ENCODE measurements at regions of chr3 and their contacts with region 1.

Region 1: GRCh38 chr3:97719156-97719821 is 45.3 kb upstream of the ARL6 start:
- DNase-seq: peak; percentile 62
- H3K4me3 Mint-ChIP-seq: no peak overlapping the region
- H3K27ac Mint-ChIP-seq: no peak overlapping the region
- H3K4me1 Mint-ChIP-seq: no peaks in the 10 kb centered on the region
- H3K27me3 Mint-ChIP-seq: peaks cover 8% of the 10 kb centered on the region

Region 2: GRCh38 chr3:97670952-97671351 is 48.3 kb before region 1 on chr3:
- CTCF ChIA-PET with region 1: no interaction called
- POLR2A ChIA-PET with region 1: no interaction called
- DNase-seq: no peak
- H3K4me3 Mint-ChIP-seq: no peak overlapping the region
- H3K27ac Mint-ChIP-seq: no peak overlapping the region
- H3K4me1 Mint-ChIP-seq: no peaks in the 10 kb centered on the region
- H3K27me3 Mint-ChIP-seq: peaks cover 9% of the 10 kb centered on the region

Region 3: DNA sequence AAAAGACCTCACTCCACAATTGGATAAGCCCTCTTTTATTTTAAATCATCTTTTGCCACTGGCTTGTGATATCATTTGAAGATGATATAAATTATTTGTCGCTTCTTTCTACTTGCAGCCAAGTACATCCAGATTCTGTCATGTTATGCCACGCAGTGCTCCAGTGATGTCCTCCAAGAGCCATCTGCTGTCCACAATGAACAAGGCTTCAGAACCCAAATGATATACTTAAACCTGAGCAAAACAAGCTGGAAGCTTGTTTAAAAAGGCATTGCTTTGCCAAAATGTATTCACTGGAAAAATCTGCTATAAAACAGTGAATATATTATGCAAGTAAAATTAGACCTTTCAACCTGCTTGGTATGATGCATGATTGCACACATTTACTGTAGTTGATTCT is 13.5 kb before region 1 on chr3:
- CTCF ChIA-PET with region 1: interaction called, 11 read pairs
- POLR2A ChIA-PET with region 1: no interaction called
- DNase-seq: no peak
- H3K4me3 Mint-ChIP-seq: no peak overlapping the region
- H3K27ac Mint-ChIP-seq: no peak overlapping the region
- H3K4me1 Mint-ChIP-seq: no peaks in the 10 kb centered on the region
- H3K27me3 Mint-ChIP-seq: peaks cover 13% of the 10 kb centered on the region